GM10248 (cell line): ENCODE measurements at regions of chr13 and their contacts with region 1.

Region 1: DNA sequence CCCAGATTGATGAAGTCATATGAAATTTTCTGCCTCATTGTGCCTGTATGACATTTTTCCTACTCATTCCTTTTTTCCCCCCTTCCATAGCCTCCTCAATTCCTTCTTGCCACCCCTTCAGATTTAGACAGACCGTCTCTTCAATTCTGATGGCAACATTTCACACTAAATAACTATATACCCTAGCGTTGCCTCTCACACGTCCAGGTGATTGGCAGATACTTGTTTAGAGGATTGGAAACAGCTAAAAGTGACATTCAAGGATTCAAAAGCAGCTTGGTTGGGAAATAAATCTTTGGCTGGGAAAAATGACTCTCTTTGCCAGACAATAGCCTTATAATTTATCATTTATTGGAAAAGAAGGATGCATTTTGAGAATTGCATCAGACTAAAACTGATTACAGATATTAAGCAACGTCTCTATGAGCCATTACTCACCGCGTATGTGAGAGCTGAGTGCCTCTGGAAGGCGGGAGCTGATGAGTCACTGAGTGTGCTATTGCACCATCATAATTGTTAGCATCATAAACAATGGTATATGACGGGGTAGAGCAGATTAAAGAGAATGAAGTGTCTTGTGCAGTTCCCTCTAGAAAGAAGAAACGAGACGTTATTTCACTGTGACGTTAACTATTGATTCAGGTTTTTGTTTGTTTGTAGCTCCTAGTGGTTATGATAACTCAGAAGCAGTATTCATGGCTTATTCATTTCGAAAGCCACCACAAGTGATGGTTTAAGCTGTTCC is 61.1 kb upstream of the FAM216B start:
- DNase-seq: no peak
- CTCF ChIP-seq: no peak

Region 2: DNA sequence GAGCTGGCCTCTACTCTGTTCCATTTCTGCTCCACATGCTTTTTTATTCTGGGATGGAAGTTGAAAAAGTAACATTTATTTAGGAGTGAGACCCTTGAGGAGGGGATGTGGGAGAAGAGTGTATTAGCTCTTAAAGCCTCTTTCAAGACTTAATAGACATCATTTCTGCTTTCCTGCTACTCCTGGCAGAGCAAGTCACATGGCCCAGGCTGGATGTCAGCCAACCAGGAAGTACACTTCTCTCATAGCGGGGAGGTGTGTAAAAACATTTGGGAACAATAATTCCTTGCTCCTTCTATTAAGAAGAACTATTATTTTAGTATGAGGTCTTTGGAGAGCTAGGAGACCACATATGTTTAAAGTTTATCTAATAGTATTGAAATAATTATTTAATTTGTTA is 20.5 kb after region 1 on chr13:
- CTCF ChIA-PET with region 1: interaction called, 10 read pairs
- POLR2A ChIA-PET with region 1: no interaction called
- DNase-seq: no peak
- CTCF ChIP-seq: no peak